Naive thymus-derived CD4-positive, alpha-beta T cell (primary cell): ENCODE measurements at regions of chr12 and their contacts with region 1.

Region 1: DNA sequence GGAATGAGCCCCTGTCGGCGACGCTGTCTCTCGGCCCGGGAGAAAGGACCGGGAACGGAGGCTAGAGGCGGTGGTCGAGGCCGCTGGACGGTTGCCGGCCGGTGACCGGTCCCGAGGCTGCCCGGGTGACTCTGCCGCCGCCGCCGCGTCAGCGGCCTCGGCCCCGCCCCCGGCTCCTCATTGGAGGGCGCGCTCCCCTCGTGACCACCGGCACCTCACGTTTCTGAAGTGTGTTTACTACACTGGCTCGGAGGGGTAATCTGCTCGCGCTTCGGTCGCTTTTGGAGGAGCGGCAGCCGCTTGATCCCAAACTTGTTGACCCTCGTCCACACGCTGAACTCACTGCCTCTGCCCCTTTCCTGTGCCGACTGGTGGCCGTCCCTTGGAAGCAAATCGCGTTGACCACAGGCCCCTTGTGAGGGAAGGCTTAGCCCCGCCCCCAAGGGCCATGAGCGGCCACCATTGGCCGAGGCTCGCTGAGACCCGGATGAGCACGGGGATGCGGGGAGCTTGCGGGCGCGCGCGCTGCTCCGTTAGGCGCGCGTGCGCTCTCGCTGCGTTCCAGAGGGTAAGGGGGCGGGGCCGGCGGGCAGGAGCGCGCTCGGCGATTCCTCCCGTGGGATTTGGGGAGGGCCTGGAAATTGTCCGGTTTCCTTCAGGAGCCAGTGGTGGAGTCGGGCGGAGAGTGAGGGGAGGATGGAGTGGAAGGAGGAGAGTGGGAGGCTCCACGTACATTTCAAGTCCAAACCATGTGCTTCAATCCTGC is at the start of gene CRY1:
- DNase-seq: peak; percentile 87 to 98 (median 94)
- ATAC-seq: peak; percentile 90
- H3K4me3 ChIP-seq: peak within 1 kb of the TSS; percentile 85
- H3K4me3 Mint-ChIP-seq: no peak within 1 kb of the TSS
- H3K27ac ChIP-seq: peak within 1 kb of the TSS; percentile 99
- H3K27ac Mint-ChIP-seq: no peak within 1 kb of the TSS
- H3K4me1 ChIP-seq: peaks cover 16 to 18% of the 10 kb centered on the region in 2 donors
- H3K4me1 Mint-ChIP-seq: peaks cover 5 to 18% (median 11%) of the 10 kb centered on the region in 7 donors
- H3K27me3 ChIP-seq: no peaks in the 10 kb centered on the region
- H3K27me3 Mint-ChIP-seq: peaks cover 0 to 11% (median 5%) of the 10 kb centered on the region in 5 donors
- total RNA-seq, gene CRY1: 8.0 to 58.4 (median 33.4) TPM

Region 2: GRCh38 chr12:106357549-106358395 is 735.8 kb before region 1 on chr12 and contains the start of gene POLR3B:
- CTCF ChIA-PET with region 1: no interaction called
- POLR2A ChIA-PET with region 1: no interaction called
- intact Hi-C with region 1: loop called (anchors 1 kb)
- DNase-seq: peak; percentile 95 to 99 (median 98)
- ATAC-seq: peak; percentile 98
- H3K4me3 ChIP-seq: peak within 1 kb of the TSS; percentile 96
- H3K4me3 Mint-ChIP-seq: peak within 1 kb of the TSS; percentile 81 to 97 (median 92)
- H3K27ac ChIP-seq: peak within 1 kb of the TSS; percentile 74
- H3K27ac Mint-ChIP-seq: peak within 1 kb of the TSS; percentile 85 to 95 (median 91)
- H3K4me1 ChIP-seq: peaks cover 6 to 12% of the 10 kb centered on the region in 2 donors
- H3K4me1 Mint-ChIP-seq: peaks cover 11 to 22% (median 17%) of the 10 kb centered on the region in 7 donors
- H3K27me3 ChIP-seq: no peaks in the 10 kb centered on the region
- H3K27me3 Mint-ChIP-seq: no peaks in the 10 kb centered on the region
- total RNA-seq, gene POLR3B: 4.7 to 8.7 (median 6.8) TPM

Region 3: DNA sequence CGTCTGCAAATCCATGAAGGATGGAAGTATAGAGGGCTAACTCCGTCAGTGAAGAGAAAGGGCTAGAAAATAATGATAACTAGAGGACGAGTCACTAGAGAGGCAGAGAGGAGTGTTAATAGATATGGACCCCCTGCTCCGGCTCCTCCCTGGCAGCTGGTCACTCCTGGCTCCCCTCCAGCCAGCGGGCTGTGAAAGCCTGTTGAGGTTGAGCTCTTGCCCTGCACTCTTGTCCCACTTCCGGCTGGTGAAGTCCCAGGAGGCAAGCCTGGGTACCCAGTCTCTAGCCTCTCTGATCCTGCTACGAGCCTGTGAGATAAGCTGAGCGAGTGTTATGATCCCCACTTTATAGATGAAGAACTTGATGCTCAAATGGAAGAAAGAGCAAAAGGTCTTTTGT is 420.5 kb before region 1 on chr12:
- CTCF ChIA-PET with region 1: no interaction called
- POLR2A ChIA-PET with region 1: no interaction called
- intact Hi-C with region 1: no loop called
- DNase-seq: no peak
- ATAC-seq: no peak
- H3K4me3 ChIP-seq: no peak overlapping the region
- H3K4me3 Mint-ChIP-seq: no peak overlapping the region
- H3K27ac ChIP-seq: no peak overlapping the region
- H3K27ac Mint-ChIP-seq: no peak overlapping the region
- H3K4me1 ChIP-seq: no peaks in the 10 kb centered on the region
- H3K4me1 Mint-ChIP-seq: no peaks in the 10 kb centered on the region
- H3K27me3 ChIP-seq: peaks cover 0 to 6% of the 10 kb centered on the region in 2 donors
- H3K27me3 Mint-ChIP-seq: peaks cover 27 to 43% (median 37%) of the 10 kb centered on the region in 5 donors

Region 4: GRCh38 chr12:107014028-107014427 is 79.6 kb before region 1 on chr12:
- CTCF ChIA-PET with region 1: no interaction called
- POLR2A ChIA-PET with region 1: no interaction called
- intact Hi-C with region 1: loop called in 1 of 2 experiments (anchors 5 kb)
- DNase-seq: no peak
- ATAC-seq: peak; percentile 57
- H3K4me3 ChIP-seq: no peak overlapping the region
- H3K4me3 Mint-ChIP-seq: no peak overlapping the region
- H3K27ac ChIP-seq: no peak overlapping the region
- H3K27ac Mint-ChIP-seq: no peak overlapping the region
- H3K4me1 ChIP-seq: no peaks in the 10 kb centered on the region
- H3K4me1 Mint-ChIP-seq: peaks cover 0 to 1% (median 0%) of the 10 kb centered on the region in 7 donors
- H3K27me3 ChIP-seq: no peaks in the 10 kb centered on the region
- H3K27me3 Mint-ChIP-seq: no peaks in the 10 kb centered on the region

Region 5: DNA sequence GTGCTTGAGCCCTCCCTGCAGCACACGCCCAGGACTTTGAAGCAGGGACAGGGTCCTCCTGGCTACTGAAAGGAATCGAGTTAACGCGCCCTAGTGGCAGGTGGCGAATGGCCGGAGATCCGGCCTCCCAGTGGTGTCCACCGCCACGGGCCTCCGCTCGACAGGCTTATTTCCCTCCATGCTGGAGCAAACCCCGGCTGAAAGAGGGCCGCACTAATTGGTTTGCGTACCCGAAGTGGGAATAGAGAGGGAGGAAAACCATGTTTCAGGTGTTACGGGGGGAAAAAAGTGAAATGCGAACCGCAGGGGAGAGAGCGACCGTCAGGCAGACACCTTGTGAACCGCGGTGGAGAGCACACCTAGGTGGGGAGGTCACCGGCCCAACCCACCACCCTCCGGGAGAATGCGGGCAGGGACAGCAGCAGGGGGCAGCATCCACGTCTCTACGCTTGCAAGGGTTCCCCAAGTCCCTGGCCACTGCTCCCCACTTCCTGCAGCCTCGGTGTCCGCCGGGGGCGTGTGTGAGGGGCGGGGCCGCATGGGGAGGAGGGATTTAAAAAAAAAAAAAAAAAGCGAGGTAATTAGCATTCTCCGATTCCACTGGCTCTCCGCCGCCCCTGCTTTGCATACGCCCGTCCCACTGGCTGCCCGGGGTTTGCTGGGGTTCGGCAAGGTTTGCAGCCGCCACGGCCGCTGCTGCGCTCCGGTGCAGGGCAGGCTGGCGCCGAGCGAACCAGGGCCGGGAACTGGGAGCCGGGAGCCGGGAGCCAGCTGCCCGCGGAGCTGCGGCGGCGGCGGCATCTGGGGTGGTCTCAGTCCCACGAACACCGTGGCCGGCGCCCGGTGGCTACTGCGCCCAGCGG is 224.4 kb after region 1 on chr12:
- CTCF ChIA-PET with region 1: no interaction called
- POLR2A ChIA-PET with region 1: interaction called, 16 read pairs
- intact Hi-C with region 1: loop called (anchors 1 kb)
- DNase-seq: peak; percentile 67 to 89 (median 85)
- ATAC-seq: peak; percentile 78
- H3K4me3 ChIP-seq: peak overlapping the region; percentile 66
- H3K4me3 Mint-ChIP-seq: peak overlapping the region; percentile 84 to 98 (median 88)
- H3K27ac ChIP-seq: peak overlapping the region; percentile 89
- H3K27ac Mint-ChIP-seq: peak overlapping the region; percentile 34 to 89 (median 62)
- H3K4me1 ChIP-seq: peaks cover 12 to 21% of the 10 kb centered on the region in 2 donors
- H3K4me1 Mint-ChIP-seq: peaks cover 11 to 38% (median 28%) of the 10 kb centered on the region in 7 donors
- H3K27me3 ChIP-seq: no peaks in the 10 kb centered on the region
- H3K27me3 Mint-ChIP-seq: peaks cover 0 to 39% (median 0%) of the 10 kb centered on the region in 5 donors

Region 6: DNA sequence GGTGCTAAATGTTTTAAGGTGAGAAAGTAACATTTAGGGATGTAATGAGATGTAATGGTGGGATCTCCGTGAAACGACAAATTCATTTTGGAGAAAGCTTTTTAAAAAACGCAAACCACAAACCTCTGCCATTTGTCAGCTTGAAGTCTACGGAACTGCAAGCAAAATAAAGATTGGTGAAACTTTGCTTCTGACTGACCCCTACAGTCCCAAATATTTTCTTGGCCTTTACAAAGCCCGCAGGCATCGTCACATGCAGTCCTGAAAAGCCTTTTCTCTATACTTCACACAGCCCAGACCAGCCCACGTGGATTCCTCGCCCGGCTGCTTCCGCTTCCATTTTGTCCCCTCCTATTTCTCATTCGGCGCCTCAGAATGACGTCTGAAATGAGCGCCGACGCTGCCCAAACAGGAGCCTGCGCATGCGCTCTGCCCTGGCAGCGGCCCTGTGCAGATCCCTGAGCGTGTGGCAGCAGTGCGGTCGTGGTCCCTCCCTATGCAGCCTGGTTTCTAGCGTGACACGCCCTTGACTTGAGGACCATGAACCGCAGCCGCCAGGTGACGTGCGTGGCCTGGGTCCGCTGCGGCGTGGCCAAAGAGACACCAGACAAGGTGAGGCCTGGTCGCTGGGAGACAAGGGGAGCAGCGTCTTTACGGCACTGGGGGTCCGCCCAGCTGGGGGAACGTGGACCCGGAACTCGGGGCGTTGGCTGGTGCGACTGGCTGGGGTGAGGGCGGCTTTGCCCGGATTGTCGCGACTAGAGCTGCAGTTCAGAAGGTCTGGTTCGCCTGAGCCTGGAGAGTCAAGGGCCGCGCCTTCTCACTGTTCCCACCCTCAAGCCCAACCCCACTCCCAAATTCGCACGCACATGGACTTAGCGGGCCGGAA is 592.0 kb after region 1 on chr12 and contains the start of gene PWP1:
- CTCF ChIA-PET with region 1: no interaction called
- POLR2A ChIA-PET with region 1: no interaction called
- intact Hi-C with region 1: loop called (anchors 1 kb)
- DNase-seq: peak; percentile 93 to 97 (median 95)
- ATAC-seq: peak; percentile 93
- H3K4me3 ChIP-seq: peak within 1 kb of the TSS; percentile 78
- H3K4me3 Mint-ChIP-seq: peak within 1 kb of the TSS; percentile 90 to 99 (median 95)
- H3K27ac ChIP-seq: peak within 1 kb of the TSS; percentile 88
- H3K27ac Mint-ChIP-seq: peak within 1 kb of the TSS; percentile 90 to 99 (median 97)
- H3K4me1 ChIP-seq: peaks cover 12 to 19% of the 10 kb centered on the region in 2 donors
- H3K4me1 Mint-ChIP-seq: peaks cover 23 to 40% (median 35%) of the 10 kb centered on the region in 7 donors
- H3K27me3 ChIP-seq: no peaks in the 10 kb centered on the region
- H3K27me3 Mint-ChIP-seq: peaks cover 0 to 3% (median 0%) of the 10 kb centered on the region in 5 donors
- total RNA-seq, gene PWP1: 20.9 to 42.5 (median 25.7) TPM

Region 7: DNA sequence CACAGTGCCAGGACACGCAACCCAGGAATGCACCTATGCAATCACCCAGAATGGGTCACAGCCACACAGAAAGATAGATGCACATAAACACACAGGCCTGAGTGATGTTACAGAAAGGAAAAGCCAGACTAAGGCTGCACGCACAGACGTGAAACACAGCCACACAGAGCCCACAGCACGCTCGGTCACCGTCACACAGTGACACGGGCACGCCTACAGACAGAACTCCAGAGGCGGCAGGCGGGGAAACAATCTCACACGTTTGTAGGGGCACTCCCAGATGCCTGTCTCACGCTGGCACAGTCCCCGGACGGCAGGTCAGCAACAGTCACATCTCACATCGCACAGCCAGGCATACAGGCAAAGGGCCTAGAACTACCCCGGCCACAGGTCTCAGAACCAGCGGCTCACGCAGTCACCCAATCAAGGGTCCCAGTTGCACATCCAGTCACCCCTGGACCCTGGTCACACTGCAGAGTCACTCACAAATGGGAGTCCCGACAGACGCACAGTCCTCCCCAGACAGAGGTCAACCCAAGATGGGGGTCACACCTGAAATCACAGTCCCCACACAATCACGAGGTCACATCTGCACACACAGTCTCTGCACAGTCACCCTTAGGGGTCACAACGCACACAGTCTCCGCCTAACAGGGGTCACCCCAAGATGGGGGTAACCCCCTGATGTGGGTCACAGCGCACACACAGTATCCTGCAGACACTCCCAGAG is 1763.0 kb after region 1 on chr12:
- CTCF ChIA-PET with region 1: no interaction called
- POLR2A ChIA-PET with region 1: no interaction called
- intact Hi-C with region 1: loop called in 1 of 2 experiments (anchors 1 kb)
- DNase-seq: peak; percentile 35 to 77 (median 54)
- ATAC-seq: peak; percentile 68
- H3K4me3 ChIP-seq: peak overlapping the region; percentile 84
- H3K4me3 Mint-ChIP-seq: peak overlapping the region; percentile 89 to 97 (median 94)
- H3K27ac ChIP-seq: peak overlapping the region; percentile 62
- H3K27ac Mint-ChIP-seq: peak overlapping the region; percentile 76 to 99 (median 92)
- H3K4me1 ChIP-seq: peaks cover 18 to 23% of the 10 kb centered on the region in 2 donors
- H3K4me1 Mint-ChIP-seq: peaks cover 26 to 56% (median 47%) of the 10 kb centered on the region in 7 donors
- H3K27me3 ChIP-seq: no peaks in the 10 kb centered on the region
- H3K27me3 Mint-ChIP-seq: peaks cover 0 to 2% (median 0%) of the 10 kb centered on the region in 5 donors